CD8-positive, alpha-beta memory T cell (primary cell): ENCODE measurements at regions of chr11 and their contacts with region 1.

Region 1: DNA sequence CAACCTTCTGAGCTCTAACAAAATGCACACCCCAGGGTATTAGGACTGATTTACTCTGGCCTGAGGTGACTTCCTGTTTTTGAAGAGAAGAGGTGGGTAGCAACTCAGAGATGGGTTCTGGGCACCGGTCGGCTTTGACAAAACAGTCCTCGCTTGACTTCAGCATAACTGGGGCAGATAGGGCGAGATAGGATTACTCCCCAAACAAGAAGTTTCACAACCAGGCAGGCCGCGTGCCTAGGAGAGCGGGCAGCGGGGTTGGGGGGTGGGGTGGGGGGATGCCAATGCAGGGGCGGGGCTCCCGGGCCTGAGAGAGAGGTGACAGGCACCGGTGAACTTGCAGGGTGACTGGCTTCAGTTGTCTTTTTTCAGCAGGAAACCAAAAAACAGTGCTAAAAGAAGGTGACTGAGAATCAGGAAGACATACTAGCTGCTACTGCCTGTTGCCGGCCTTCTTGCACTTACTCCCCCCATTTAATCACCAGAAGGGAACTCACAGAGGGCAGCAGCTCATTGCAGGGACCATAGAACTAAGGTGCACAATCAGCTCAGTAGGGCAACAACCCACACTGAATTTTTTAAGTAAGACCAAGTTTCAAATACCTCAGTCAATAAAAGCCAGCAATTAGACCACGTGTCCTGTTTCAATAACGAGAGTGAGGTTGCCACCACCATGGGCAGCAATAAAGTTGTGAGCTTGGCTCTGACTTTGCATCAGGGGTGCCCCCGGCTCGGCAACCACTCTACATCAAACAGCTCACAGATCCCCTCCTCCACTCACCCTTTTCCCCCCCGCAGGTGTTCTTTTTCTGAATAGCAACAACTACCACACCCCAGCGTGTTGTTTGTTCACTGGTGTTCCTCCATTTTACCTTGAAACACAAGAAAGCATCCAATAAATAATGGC is 37.2 kb upstream of the ETS1 start:
- DNase-seq: peak; percentile 55 to 87 (median 71)
- H3K4me3 ChIP-seq: peak overlapping the region; percentile 44
- H3K4me3 Mint-ChIP-seq: peak overlapping the region; percentile 75 to 88 (median 77)
- H3K27ac ChIP-seq: peak overlapping the region; percentile 59
- H3K27ac Mint-ChIP-seq: peak overlapping the region; percentile 93 to 99 (median 98)
- H3K4me1 ChIP-seq: peaks cover 67% of the 10 kb centered on the region
- H3K4me1 Mint-ChIP-seq: peaks cover 90 to 100% (median 99%) of the 10 kb centered on the region in 3 donors
- H3K27me3 ChIP-seq: no peaks in the 10 kb centered on the region
- H3K27me3 Mint-ChIP-seq: peaks cover 0 to 2% of the 10 kb centered on the region in 2 donors

Region 2: GRCh38 chr11:128610721-128611617 is 13.6 kb before region 1 on chr11:
- CTCF ChIA-PET with region 1: interaction called, 3 read pairs
- POLR2A ChIA-PET with region 1: interaction called, 16 read pairs
- DNase-seq: peak; percentile 13 to 87 (median 75)
- H3K4me3 ChIP-seq: peak overlapping the region; percentile 21
- H3K4me3 Mint-ChIP-seq: peak overlapping the region in 6 of 7 donors; percentile 30 to 86 (median 70)
- H3K27ac ChIP-seq: no peak overlapping the region
- H3K27ac Mint-ChIP-seq: peak overlapping the region; percentile 89 to 99 (median 96)
- H3K4me1 ChIP-seq: peaks cover 52% of the 10 kb centered on the region
- H3K4me1 Mint-ChIP-seq: peaks cover 45 to 47% (median 47%) of the 10 kb centered on the region in 3 donors
- H3K27me3 ChIP-seq: no peaks in the 10 kb centered on the region
- H3K27me3 Mint-ChIP-seq: peaks cover 0 to 1% of the 10 kb centered on the region in 2 donors

Region 3: GRCh38 chr11:128716661-128717210 is 92.2 kb after region 1 on chr11:
- CTCF ChIA-PET with region 1: no interaction called
- POLR2A ChIA-PET with region 1: no interaction called
- DNase-seq: peak; percentile 39 to 75 (median 64)
- H3K4me3 ChIP-seq: peak overlapping the region; percentile 54
- H3K4me3 Mint-ChIP-seq: peak overlapping the region; percentile 59 to 88 (median 82)
- H3K27ac ChIP-seq: no peak overlapping the region
- H3K27ac Mint-ChIP-seq: peak overlapping the region; percentile 94 to 100 (median 98)
- H3K4me1 ChIP-seq: peaks cover 99% of the 10 kb centered on the region
- H3K4me1 Mint-ChIP-seq: peaks cover 100% of the 10 kb centered on the region in 3 donors
- H3K27me3 ChIP-seq: no peaks in the 10 kb centered on the region
- H3K27me3 Mint-ChIP-seq: no peaks in the 10 kb centered on the region